Common myeloid progenitor, CD34-positive (primary cell): ENCODE measurements at regions of chr22 and their contacts with region 1.

Region 1: GRCh38 chr22:45645526-45646414 is 25.9 kb upstream of the ATXN10 start:
- DNase-seq: peak; percentile 50 to 68 (median 62)
- H3K4me3 ChIP-seq: peak overlapping the region in 3 of 7 experiments; percentile 28 to 50 (median 36)
- H3K27ac ChIP-seq: no peak overlapping the region
- H3K4me1 ChIP-seq: peaks cover 0 to 40% (median 31%) of the 10 kb centered on the region in 4 experiments
- H3K27me3 ChIP-seq: peaks cover 0 to 36% (median 2%) of the 10 kb centered on the region in 5 experiments

Region 2: GRCh38 chr22:45537734-45538181 is 108.0 kb before region 1 on chr22:
- CTCF ChIA-PET with region 1: no interaction called
- POLR2A ChIA-PET with region 1: no interaction called
- DNase-seq: no peak
- H3K4me3 ChIP-seq: no peak overlapping the region
- H3K27ac ChIP-seq: no peak overlapping the region
- H3K4me1 ChIP-seq: peaks cover 0 to 2% (median 0%) of the 10 kb centered on the region in 4 experiments
- H3K27me3 ChIP-seq: no peaks in the 10 kb centered on the region

Region 3: DNA sequence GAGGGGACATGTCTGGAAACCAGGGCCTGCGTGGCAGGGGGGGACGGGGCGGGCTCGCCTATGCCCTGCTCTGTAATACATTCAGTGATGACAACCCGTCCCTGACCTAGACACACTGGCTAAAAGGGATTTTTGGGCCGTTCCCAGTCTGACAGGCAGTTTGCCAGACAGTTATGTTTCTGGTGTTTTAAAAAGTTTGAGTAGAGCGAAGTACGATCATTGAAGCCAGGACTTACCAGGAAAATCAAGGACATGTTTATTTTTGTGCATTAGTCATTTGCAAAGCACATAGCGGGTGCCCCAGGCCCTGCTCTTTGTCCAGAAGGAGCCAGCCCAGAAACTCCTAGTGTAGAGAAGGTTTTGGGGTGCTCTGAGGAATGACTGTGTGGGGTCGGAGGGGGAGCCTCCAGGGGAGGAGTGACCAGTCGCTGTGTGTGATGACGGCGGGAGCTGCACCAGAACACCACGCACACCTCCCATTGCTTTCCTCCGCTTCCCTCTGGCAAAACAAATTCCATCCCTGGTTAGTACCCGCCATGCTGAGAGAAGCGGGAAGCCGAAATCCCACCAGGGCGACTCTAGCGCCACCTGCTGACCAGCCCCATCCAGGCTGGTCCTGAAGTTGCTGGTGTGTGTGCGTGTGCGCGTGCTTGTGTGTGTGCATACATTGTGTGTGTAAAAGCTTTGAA is 92.3 kb before region 1 on chr22:
- CTCF ChIA-PET with region 1: no interaction called
- POLR2A ChIA-PET with region 1: no interaction called
- DNase-seq: peak; percentile 75 to 80 (median 78)
- H3K4me3 ChIP-seq: no peak overlapping the region
- H3K27ac ChIP-seq: no peak overlapping the region
- H3K4me1 ChIP-seq: no peaks in the 10 kb centered on the region
- H3K27me3 ChIP-seq: no peaks in the 10 kb centered on the region

Region 4: DNA sequence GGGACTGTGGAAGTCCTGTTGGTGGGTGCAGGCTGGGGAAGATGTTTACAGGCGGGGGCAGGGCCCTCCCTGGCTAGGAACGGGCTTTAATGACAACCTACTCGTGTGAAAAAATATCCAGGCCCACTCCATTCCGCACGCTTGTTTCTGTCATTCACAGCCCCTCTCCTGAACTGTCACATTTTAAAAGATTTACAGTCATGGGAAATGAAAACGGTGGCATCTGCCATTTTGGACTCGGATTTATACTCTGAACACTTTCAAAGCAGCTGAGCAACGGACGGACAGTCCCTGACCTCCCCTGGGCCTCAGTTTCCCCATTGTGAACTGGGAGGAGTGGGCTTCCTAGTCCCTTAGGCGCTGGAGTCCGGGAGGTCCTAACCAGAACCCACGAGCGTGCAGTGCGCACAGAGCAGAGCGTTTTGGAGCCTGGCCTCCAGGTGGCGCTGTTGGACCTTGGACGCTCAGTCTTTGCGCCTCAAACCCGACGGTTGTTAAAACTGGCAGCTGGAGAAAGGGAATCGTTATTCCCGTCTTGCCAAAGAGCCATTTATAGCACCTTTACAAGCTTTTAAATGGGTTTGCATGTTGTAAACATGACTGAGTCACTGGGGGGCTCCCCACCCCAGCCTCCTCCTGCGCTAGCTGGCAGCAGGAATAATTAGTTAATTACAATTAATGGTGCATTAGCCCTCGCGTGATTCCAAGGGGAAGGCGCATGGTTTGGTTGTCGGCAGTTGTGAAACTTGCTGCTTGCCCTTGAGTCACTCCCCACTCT is 67.8 kb before region 1 on chr22:
- CTCF ChIA-PET with region 1: interaction called, 17 read pairs
- POLR2A ChIA-PET with region 1: no interaction called
- DNase-seq: peak; percentile 78 to 88 (median 83)
- H3K4me3 ChIP-seq: no peak overlapping the region
- H3K27ac ChIP-seq: no peak overlapping the region
- H3K4me1 ChIP-seq: peaks cover 0 to 16% (median 6%) of the 10 kb centered on the region in 4 experiments
- H3K27me3 ChIP-seq: peaks cover 0 to 34% (median 5%) of the 10 kb centered on the region in 5 experiments